Sciatic nerve (tissue), 2 donors: ENCODE measurements at regions of chr12 and their contacts with region 1.

Region 1: GRCh38 chr12:62426089-62426488 is 40.5 kb upstream of the MON2 start:
- DNase-seq: no peak
- ATAC-seq: no peak

Region 2: GRCh38 chr12:60704171-60704930 is 1721.7 kb before region 1 on chr12:
- intact Hi-C with region 1: no loop called
- DNase-seq: no peak
- ATAC-seq: no peak

Region 3: GRCh38 chr12:63989301-63989845 is 1563.3 kb after region 1 on chr12:
- intact Hi-C with region 1: loop called (anchors 5 kb)
- DNase-seq: no peak
- ATAC-seq: peak; percentile 27